Left cardiac atrium (tissue), 4 donors: ENCODE measurements at regions of chr17 and their contacts with region 1.

Region 1: GRCh38 chr17:7687908-7688807 is at the start of gene WRAP53:
- DNase-seq: peak; percentile 97
- ATAC-seq: peak; percentile 93 to 95
- total RNA-seq, gene WRAP53: 3.7 to 6.0 TPM

Region 2: DNA sequence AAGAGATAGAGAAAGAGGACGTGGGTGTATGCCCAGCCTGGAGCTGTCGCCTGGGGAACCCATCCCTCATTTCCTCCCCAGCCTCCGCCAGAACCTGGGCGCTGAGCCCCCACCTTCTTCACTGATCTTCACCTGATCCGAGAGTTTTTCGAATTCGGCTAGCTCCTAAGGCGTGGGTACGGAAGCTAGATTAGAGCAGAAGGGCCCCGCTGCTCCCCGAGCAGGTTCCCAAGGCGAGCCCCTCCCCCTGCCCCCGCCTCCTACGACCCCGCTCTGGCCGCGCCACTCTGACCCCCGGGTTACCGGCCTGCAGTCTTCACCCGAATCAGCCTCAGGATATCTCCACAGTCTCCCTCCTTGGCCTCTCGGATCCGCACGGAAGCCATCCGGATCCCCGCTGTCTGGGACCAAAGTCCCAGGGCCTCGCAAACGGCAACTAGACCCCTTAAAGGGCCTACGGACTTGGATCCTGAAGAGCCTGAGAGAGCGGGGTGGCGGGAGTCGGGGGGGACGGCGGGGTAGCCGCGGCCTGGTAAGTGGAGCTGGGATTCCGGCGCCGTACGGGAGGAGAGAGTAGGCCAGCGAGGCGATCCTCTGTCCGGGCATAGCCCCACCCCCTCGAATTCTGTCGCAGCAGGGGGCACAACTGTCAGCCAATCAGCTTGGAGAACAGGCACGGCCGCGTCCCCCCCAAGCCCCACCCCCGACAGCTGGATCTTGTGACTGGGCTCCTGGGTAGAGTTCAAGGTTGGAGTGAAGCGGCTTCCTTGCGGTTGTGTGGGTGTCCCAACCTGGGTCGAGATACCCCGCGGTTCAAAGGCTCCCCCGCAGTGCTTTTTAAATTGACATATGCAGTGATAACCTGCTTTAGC is 60.7 kb before region 1 on chr17 and contains the start of gene SAT2:
- intact Hi-C with region 1: loop called (anchors 2 to 10 kb)
- DNase-seq: peak; percentile 96
- ATAC-seq: peak; percentile 99
- total RNA-seq, gene SAT2: 84.1 to 86.4 TPM

Region 3: DNA sequence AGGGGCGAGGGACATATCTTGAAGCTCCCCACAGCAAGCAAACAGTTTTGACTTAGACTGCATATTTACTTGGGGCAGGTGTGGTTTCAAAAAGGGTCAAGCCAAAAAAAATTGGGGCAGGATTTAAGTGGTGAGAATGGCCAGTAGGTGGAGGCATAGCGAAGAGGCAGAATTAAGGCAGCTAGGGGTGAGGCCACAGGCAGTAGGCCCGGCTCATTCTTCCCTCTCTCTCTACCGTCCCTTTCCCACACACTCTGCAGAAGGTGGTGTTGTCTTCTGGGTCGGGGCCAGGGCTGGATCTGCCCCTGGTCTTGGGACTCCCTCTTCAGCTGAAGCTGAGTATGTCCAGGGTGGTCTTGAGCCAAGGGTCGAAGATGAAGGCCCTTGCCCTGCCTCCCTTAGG is 55.7 kb before region 1 on chr17:
- intact Hi-C with region 1: loop called (anchors 2 to 10 kb)
- DNase-seq: no peak
- ATAC-seq: peak; percentile 21 to 32

Region 4: DNA sequence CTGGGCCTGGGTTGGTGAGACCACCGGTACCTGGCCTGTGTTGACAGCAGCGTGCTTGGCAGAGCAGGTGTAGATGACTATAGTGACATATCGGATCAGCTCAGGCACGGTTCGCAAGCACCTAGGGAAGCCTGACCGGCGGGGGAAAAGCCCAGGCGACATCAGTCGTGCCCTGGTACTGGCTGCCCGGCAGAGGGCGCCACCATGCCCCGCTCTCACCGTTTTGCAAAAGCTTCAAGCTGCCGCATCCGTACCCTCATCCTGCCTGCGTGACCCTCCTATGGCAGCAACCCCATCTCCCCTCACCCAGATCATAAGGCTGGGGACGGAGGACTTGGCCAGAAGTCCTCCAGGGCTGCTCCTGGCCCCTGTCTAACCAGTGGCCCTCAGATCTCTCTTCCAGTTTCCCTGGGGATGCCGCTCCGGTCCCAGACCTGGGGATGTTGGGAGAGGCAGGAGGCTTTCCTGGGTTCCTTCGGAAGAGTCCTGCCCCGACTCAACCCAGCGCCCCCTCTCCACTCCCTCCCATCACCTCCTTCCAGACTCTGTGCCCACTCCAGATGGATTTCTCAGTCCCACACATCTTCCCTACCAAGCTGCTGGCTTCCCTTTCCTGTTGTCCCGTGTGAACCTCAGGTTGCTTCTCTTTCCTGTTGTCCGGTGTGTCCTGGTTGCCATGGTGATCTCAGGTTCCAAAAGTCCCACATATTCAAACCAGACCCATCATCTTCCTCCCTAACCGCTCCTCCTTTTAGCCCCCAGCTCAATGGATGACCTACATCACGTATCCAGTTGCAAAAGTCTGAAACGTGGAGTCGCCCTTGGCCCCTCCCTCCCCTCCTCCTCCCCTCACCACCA is 385.7 kb after region 1 on chr17:
- intact Hi-C with region 1: no loop called
- DNase-seq: peak; percentile 71
- ATAC-seq: peak; percentile 71 to 76